HCT116 (cell line): ENCODE measurements at regions of chr1 and their contacts with region 1.

Region 1: GRCh38 chr1:85307987-85308832 is 31.8 kb upstream of the BCL10 start:
- DNase-seq: peak; percentile 78
- ATAC-seq: peak; percentile 99
- H3K4me3 ChIP-seq: no peak overlapping the region
- H3K27ac ChIP-seq: no peak overlapping the region
- H3K4me1 ChIP-seq: peaks cover 3 to 15% of the 10 kb centered on the region in 2 experiments; a peak in 2 of 4 replicates
- H3K27me3 ChIP-seq: no peaks in the 10 kb centered on the region
- CTCF ChIP-seq: peak; percentile 98 to 100 (median 99)
- POLR2A ChIP-seq: no peak
- RAD21 ChIP-seq: peak; percentile 100

Region 2: GRCh38 chr1:85027242-85027983 is 280.8 kb before region 1 on chr1:
- CTCF ChIA-PET with region 1: no interaction called
- POLR2A ChIA-PET with region 1: no interaction called
- RAD21 ChIA-PET with region 1: no interaction called
- intact Hi-C with region 1: no loop called
- DNase-seq: no peak
- ATAC-seq: no peak
- H3K4me3 ChIP-seq: no peak overlapping the region
- H3K27ac ChIP-seq: no peak overlapping the region
- H3K4me1 ChIP-seq: no peaks in the 10 kb centered on the region
- H3K27me3 ChIP-seq: no peaks in the 10 kb centered on the region
- CTCF ChIP-seq: peak in 1 of 3 experiments; percentile 15; a peak in 1 of 6 replicates
- POLR2A ChIP-seq: no peak
- RAD21 ChIP-seq: peak; percentile 36

Region 3: DNA sequence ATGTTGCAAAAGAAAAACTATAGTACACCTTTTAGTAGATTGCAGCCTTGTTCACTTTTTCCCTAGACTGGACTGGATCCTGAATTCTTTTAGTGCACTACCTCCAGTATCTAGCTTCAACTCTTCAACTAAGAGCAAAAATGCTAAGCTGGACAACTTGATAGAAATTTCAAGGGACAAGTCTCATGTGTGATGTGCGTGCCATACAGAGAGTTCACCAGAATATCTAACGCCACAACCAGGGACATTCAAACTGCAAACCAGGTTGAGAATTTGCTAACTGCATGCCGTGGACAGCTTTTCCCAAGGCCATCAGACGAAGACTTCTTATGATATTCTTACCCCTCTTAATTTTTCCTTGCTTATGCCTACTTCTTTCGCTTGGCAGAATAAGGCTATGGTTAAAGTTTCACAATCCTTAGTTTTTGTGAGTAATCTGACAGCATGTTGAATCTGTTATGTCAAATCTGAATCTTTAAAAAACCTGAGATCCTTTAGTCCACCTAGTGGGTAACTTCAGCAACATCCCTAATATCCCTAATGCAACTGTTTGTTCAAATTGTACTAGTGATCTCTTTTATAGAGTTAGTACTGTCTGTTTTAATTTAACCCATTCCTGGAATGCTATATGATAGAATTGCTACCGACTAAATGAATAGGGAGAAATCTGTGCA is 90.3 kb after region 1 on chr1:
- CTCF ChIA-PET with region 1: no interaction called
- POLR2A ChIA-PET with region 1: no interaction called
- RAD21 ChIA-PET with region 1: no interaction called
- intact Hi-C with region 1: loop called (anchors 5 kb)
- DNase-seq: no peak
- ATAC-seq: peak; percentile 54; the same call in 1 of the 2 replicates
- H3K4me3 ChIP-seq: no peak overlapping the region
- H3K27ac ChIP-seq: no peak overlapping the region
- H3K4me1 ChIP-seq: no peaks in the 10 kb centered on the region
- H3K27me3 ChIP-seq: no peaks in the 10 kb centered on the region
- CTCF ChIP-seq: peak; percentile 23 to 43 (median 25); a peak in 4 of 6 replicates
- POLR2A ChIP-seq: no peak
- RAD21 ChIP-seq: peak; percentile 44; the same call in 1 of the 2 replicates

Region 4: DNA sequence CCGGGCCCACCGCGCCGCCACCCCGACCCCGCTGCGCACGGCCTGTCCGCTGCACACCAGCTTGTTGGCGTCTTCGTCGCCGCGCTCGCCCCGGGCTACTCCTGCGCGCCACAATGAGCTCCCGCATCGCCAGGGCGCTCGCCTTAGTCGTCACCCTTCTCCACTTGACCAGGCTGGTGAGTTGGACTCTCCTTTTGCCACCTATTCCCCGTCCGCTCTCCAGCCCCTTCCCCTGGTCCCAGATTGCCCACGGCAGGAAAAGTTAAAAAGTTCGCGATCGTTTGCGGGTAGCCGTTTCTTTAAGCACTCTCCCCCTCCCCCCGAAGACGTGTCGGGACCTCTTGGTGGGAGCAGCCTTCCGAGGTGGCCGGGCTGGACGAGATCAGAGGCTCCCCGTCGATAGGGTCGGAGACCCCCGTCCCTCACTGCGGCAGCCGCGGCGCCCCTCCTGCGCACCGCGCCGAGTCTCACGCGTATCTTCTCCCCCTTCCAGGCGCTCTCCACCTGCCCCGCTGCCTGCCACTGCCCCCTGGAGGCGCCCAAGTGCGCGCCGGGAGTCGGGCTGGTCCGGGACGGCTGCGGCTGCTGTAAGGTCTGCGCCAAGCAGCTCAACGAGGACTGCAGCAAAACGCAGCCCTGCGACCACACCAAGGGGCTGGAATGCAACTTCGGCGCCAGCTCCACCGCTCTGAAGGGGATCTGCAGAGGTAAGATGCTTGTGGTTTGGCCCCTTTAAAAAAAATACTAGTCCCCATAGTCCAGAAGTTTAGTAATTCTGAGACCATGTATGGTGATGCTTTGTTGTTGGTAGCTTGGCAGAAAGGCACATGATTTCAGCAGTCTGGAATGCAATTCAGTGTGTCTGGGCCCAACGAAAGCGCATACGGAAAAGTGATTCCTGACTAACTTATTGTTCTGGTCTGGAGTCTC is 272.9 kb after region 1 on chr1:
- CTCF ChIA-PET with region 1: interaction called, 24 read pairs
- POLR2A ChIA-PET with region 1: interaction called, 10 read pairs
- RAD21 ChIA-PET with region 1: interaction called in 1 of 2 experiments, 3 read pairs
- intact Hi-C with region 1: loop called (anchors 1 kb)
- DNase-seq: no peak
- ATAC-seq: peak; percentile 65
- H3K4me3 ChIP-seq: peak overlapping the region; percentile 74 to 93
- H3K27ac ChIP-seq: peak overlapping the region; percentile 71
- H3K4me1 ChIP-seq: peaks cover 32 to 72% of the 10 kb centered on the region in 2 experiments
- H3K27me3 ChIP-seq: no peaks in the 10 kb centered on the region
- CTCF ChIP-seq: peak; percentile 82 to 89 (median 83)
- POLR2A ChIP-seq: no peak
- RAD21 ChIP-seq: peak; percentile 81

Region 5: GRCh38 chr1:85692730-85693314 is 384.6 kb after region 1 on chr1:
- CTCF ChIA-PET with region 1: interaction called, 24 read pairs
- POLR2A ChIA-PET with region 1: no interaction called
- RAD21 ChIA-PET with region 1: interaction called in 1 of 2 experiments, 4 read pairs
- intact Hi-C with region 1: loop called (anchors 1 kb)
- DNase-seq: peak; percentile 6
- ATAC-seq: no peak
- H3K4me3 ChIP-seq: no peak overlapping the region
- H3K27ac ChIP-seq: no peak overlapping the region
- H3K4me1 ChIP-seq: no peaks in the 10 kb centered on the region
- H3K27me3 ChIP-seq: no peaks in the 10 kb centered on the region
- CTCF ChIP-seq: peak; percentile 34 to 81 (median 67); a peak in 4 of 6 replicates
- POLR2A ChIP-seq: no peak
- RAD21 ChIP-seq: peak; percentile 72

Region 6: GRCh38 chr1:85884372-85885035 is 576.3 kb after region 1 on chr1:
- CTCF ChIA-PET with region 1: no interaction called
- POLR2A ChIA-PET with region 1: no interaction called
- RAD21 ChIA-PET with region 1: no interaction called
- intact Hi-C with region 1: loop called (anchors 10 kb)
- DNase-seq: no peak
- ATAC-seq: peak; percentile 76
- H3K4me3 ChIP-seq: no peak overlapping the region
- H3K27ac ChIP-seq: no peak overlapping the region
- H3K4me1 ChIP-seq: no peaks in the 10 kb centered on the region
- H3K27me3 ChIP-seq: no peaks in the 10 kb centered on the region
- CTCF ChIP-seq: peak; percentile 26 to 51 (median 42); a peak in 4 of 6 replicates
- POLR2A ChIP-seq: no peak
- RAD21 ChIP-seq: peak; percentile 55